ENCODE measurements at regions of chr1 and their contacts with region 1.

Region 1: GRCh38 chr1:34302798-34303197 is 126.1 kb downstream of the C1orf94 start:
- DNase-seq: no peak
- H3K4me3 ChIP-seq: no peak overlapping the region
- CTCF ChIP-seq: no peak

Region 2: GRCh38 chr1:34358636-34359035 is 55.8 kb after region 1 on chr1:
- in situ Hi-C with region 1: loop called (anchors 5 kb)
- DNase-seq: no peak
- H3K4me3 ChIP-seq: no peak overlapping the region
- CTCF ChIP-seq: no peak

Measured in astrocyte of the cerebellum (primary cell).